Calu3 (cell line): ENCODE measurements at regions of chr6 and their contacts with region 1.

Region 1: DNA sequence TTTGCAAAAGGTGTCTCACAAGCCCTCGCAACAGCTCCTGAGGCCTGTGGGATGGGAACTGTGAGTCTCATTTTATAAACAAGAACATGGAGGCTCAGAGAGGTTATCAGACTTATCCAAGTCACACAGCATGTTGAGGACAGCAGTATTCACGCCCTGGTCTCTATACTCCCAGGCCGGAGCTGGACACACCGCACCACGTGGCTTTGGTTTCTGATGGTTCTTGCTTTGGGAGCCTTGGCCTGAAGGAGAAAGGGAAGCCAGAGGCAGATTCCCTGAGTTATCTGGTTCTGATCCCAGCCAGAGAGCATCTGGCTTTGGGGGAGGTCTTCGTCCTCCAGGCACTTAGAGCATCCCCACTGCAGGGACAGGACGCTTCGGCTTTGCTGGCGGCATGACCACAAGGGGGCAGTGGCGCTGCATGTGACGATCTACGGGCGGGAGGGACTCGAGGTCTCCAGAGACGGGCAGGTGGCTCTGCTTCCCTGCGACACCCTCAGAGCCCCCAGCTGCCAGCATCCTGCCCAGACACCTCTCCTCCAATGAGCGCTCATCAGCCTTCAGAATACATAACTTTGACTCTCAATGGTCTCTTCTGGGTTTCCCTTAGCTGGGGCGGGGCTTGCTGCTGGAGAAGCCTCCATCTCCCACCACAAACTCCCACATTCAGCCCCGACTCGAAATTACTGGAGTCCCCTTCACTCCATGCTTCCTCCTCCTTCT is 51.4 kb upstream of the SAYSD1 start:
- DNase-seq: peak; percentile 96
- H3K4me3 Mint-ChIP-seq: no peak overlapping the region
- H3K27ac Mint-ChIP-seq: no peak overlapping the region
- H3K4me1 Mint-ChIP-seq: peaks cover 32% of the 10 kb centered on the region
- H3K27me3 Mint-ChIP-seq: no peaks in the 10 kb centered on the region
- CTCF ChIP-seq: peak; percentile 99

Region 2: DNA sequence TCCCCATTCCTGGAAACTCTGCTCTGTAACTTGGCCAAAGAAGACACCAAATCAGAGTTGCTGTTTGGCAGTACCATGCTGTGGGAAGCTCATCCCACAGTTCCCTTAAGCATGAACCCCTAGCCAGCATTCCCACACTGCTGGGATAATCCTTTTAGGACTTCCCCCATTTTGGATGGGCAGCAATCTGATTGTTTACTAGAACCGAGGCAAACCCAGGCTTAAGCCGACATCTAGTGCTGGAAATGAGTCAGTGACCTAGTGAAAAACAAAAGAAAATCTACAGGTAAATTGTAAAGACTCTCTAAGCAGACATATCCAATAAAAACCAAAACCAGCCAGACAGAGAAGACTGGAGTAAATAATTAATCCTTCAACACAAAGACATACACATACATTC is 446.1 kb before region 1 on chr6:
- CTCF ChIA-PET with region 1: no interaction called
- intact Hi-C with region 1: no loop called
- DNase-seq: peak; percentile 25
- H3K4me3 Mint-ChIP-seq: no peak overlapping the region
- H3K27ac Mint-ChIP-seq: no peak overlapping the region
- H3K4me1 Mint-ChIP-seq: peaks cover 12% of the 10 kb centered on the region
- H3K27me3 Mint-ChIP-seq: peaks cover 14% of the 10 kb centered on the region
- CTCF ChIP-seq: no peak

Region 3: DNA sequence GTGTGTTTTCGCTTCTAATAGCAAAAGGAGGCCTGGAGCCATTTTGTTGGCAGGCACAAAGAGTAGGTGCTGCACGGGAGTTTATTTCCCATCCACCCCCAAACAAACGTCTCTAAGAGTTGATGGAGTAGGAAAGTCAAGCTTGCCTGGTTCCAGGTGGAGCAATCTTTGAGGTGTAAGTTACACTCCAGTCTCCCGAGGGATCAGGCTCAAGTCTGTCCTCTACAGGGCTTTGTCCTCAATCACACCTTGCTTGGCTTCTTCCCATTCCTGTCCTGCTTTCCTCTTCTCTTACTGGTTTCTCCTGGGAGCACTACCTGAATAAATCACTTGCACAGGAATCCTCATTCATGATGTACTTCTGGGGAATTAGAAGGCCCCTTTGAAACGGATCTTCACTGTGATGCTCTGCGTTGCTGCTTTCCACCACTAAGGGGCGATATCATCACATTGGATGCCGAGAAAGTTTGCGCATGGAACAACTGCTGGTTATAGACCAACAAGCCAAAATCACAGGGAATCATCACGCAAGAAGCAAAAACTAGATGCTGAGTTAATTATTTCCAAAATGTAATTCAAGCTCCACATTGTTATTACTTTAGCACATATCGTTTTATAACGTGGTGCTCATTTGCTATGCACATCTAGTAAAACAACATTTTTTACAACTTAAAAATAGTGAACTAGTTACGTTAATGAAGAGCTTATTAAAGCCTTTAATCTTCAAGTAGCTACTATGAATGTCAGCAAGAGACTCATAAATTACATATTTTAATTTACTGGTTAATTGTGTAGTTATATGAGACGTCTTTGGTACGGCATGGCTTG is 294.4 kb before region 1 on chr6:
- CTCF ChIA-PET with region 1: no interaction called
- intact Hi-C with region 1: loop called (anchors 5 kb)
- DNase-seq: peak; percentile 74
- H3K4me3 Mint-ChIP-seq: no peak overlapping the region
- H3K27ac Mint-ChIP-seq: no peak overlapping the region
- H3K4me1 Mint-ChIP-seq: no peaks in the 10 kb centered on the region
- H3K27me3 Mint-ChIP-seq: peaks cover 15% of the 10 kb centered on the region
- CTCF ChIP-seq: peak; percentile 91

Region 4: DNA sequence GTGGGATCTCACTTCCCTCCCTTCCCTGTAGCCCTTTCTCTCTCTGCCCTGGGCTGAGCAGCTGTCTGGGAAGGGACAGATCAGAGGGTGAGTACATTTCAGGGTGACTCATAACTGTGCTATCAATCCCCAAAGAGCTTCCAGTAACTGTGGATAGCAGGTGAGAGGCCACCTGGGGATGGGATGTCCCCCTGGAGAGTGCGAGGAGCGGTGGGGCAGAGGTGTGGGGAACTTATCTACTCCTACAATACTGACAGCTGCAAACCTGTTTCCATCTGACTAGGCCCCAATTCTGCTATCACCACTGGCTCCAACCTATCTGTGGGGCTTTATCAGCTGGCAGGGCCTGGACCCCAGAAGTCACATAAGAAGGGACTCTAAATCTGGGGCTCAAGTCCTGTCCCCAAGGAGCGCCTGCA is 30.3 kb after region 1 on chr6:
- CTCF ChIA-PET with region 1: interaction called, 10 read pairs
- intact Hi-C with region 1: loop called (anchors 5 kb)
- DNase-seq: no peak
- H3K4me3 Mint-ChIP-seq: peak overlapping the region; percentile 15
- H3K27ac Mint-ChIP-seq: peak overlapping the region; percentile 63
- H3K4me1 Mint-ChIP-seq: peaks cover 62% of the 10 kb centered on the region
- H3K27me3 Mint-ChIP-seq: no peaks in the 10 kb centered on the region
- CTCF ChIP-seq: no peak

Region 5: GRCh38 chr6:39203852-39204375 is 37.6 kb after region 1 on chr6:
- CTCF ChIA-PET with region 1: interaction called, 3 read pairs
- intact Hi-C with region 1: loop called (anchors 5 kb)
- DNase-seq: peak; percentile 99
- H3K4me3 Mint-ChIP-seq: peak overlapping the region; percentile 62
- H3K27ac Mint-ChIP-seq: peak overlapping the region; percentile 97
- H3K4me1 Mint-ChIP-seq: peaks cover 93% of the 10 kb centered on the region
- H3K27me3 Mint-ChIP-seq: no peaks in the 10 kb centered on the region
- CTCF ChIP-seq: no peak

Region 6: DNA sequence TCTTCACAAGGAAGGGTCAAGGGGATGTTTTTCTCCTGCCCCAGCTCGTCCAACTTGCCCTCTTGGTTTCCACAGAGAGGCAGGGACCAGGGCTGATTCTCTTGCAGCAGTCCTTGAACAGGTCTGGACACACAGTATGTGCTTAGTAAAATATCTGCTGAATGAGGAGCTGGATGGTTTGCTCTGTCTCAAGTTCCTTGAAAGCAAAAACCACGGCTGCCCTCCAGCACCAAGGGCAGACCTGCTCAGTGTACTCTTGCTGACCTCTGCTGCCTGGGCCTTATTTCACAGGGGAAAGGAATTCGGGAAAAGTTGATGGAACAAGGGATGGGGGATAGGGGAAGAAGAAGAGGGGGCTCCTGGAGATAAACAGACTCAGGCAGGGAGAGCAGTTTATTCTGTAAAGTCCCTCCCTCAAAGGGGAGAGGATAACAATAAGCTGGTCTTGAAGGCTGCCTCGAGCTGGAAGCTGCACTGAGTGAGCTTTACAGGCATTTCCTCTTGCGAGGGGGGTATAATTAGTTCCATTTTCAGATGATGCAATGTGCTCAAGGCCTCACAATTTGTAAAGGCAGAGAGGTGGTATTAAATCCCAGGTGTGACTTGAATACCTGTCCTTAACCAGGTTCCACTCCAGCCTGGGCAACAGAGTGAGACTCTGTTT is 52.7 kb after region 1 on chr6:
- CTCF ChIA-PET with region 1: interaction called, 3 read pairs
- intact Hi-C with region 1: loop called (anchors 2 kb)
- DNase-seq: no peak
- H3K4me3 Mint-ChIP-seq: peak overlapping the region; percentile 5
- H3K27ac Mint-ChIP-seq: peak overlapping the region; percentile 53
- H3K4me1 Mint-ChIP-seq: peaks cover 97% of the 10 kb centered on the region
- H3K27me3 Mint-ChIP-seq: no peaks in the 10 kb centered on the region
- CTCF ChIP-seq: no peak